ENCODE measurements at regions of chr22 and their contacts with region 1.

Region 1: DNA sequence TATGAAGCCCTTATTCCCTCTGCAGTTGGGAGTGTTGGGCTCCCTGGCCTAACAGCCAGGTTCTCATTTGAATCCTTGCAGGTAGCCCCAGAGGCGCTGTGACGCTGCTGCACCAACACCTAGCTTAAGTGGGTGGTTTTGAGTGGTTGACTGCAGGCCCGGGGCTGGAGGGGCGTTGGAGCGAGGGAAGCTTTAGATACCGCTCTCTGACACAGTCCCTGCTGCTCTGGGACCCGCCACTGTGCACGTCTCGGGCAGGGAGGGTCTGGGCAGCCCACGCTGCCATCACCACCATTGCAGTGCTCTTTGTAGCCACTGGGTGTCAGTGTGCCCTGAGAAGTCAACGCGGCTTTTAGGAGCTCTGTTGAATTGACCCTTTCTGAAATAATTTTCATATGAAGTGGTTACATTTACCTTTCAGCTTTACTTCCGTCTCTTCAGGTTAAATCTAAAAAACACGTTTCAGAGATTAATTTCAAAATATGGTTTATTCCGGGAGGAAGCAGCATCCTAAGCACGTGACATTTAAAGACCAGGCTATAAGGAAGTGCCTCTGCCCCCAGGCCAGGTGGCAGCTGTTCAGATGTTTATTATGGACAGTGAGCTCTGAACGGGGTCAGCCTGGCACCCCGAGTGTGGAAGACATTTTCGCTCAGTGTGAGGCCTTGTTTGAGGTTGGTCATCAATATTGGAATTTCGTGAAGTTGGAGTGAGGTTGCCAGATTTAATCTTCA is 30.9 kb upstream of the PARVB start:
- H3K4me3 Mint-ChIP-seq: no peak overlapping the region
- H3K27ac Mint-ChIP-seq: peak overlapping the region; percentile 82
- H3K4me1 Mint-ChIP-seq: peaks cover 41% of the 10 kb centered on the region
- H3K27me3 Mint-ChIP-seq: no peaks in the 10 kb centered on the region

Region 2: GRCh38 chr22:43826142-43827002 is 166.8 kb before region 1 on chr22:
- intact Hi-C with region 1: no loop called
- H3K4me3 Mint-ChIP-seq: no peak overlapping the region
- H3K27ac Mint-ChIP-seq: no peak overlapping the region
- H3K4me1 Mint-ChIP-seq: no peaks in the 10 kb centered on the region
- H3K27me3 Mint-ChIP-seq: peaks cover 2% of the 10 kb centered on the region

Region 3: DNA sequence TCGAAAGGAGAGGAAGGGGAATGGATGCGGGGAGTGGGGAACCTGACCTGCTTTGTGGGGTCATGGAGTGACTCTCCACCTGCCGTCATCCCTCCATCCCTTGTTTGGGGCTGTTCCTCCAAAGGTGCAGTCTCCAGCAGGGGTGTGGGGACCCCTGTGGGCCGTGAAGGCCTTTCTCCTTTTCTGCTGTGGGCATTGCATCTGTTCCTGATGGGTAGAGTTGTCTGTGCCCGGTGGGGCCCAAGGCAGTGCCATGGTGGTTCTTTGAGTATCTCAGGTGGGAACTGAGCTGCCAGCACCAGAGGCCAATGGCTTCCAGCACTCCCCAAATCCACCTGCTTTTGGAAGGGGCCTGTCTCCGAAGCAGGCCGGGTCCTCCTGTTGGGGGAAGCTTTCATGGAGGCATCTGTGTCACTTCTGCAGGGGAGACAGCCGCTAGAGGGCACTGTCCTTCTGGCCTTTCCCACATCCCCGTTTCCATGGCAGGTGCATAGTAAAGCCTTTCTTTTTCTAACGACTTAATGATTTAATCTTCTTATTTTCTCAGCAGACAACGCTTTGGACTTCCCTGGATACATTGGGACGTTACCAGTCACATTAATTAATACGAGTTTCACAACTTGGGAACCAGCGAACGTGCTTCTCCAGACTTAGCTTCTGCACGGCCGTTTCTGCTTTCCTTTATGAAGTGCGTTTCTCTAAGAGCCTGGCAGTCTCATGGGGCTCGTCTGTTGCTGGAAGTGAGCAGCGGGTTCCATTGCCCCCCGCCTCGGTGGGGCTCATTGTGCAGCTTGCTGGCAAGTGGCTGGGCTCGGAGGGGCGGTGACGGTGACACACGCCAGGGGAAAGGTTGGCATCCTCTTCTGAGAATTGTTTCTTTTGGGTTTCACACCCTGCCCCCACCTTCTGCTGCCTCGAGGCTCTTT is 88.0 kb after region 1 on chr22:
- intact Hi-C with region 1: loop called (anchors 1 kb)
- H3K4me3 Mint-ChIP-seq: no peak overlapping the region
- H3K27ac Mint-ChIP-seq: no peak overlapping the region
- H3K4me1 Mint-ChIP-seq: peaks cover 20% of the 10 kb centered on the region
- H3K27me3 Mint-ChIP-seq: no peaks in the 10 kb centered on the region

Region 4: DNA sequence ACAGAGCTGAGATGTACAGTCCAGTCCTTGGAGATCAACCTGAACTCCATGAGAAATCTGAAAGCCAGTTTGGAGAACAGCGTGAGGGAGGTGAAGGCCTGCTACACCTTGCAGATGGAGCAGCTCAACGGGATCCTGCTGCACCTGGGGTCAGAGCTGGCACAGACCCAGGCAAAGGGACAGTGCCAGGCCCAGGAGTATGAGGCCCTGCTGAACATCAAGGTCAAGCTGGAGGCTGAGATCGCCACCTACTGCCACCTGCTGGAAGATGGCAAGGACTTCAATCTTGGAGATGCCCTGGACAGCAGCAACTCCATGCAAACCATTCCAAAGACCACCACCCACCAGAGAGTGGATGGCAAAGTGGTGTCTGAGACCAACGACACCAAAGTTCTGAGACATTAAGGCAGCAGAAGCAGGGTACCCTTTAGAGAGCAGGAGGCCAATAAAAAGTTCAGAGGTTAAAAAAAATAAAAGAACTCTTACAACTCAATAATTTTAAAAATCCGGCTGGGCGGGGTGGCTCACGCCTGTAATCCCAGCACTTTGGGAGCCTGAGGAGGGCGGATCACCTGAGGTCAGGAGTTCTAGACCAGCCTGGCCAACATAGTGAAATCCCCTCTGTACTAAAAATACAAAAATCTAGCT is 574.8 kb after region 1 on chr22:
- intact Hi-C with region 1: loop called (anchors 2 kb)
- H3K4me3 Mint-ChIP-seq: no peak overlapping the region
- H3K27ac Mint-ChIP-seq: no peak overlapping the region
- H3K4me1 Mint-ChIP-seq: no peaks in the 10 kb centered on the region
- H3K27me3 Mint-ChIP-seq: peaks cover 7% of the 10 kb centered on the region

Region 5: GRCh38 chr22:44625981-44626687 is 632.9 kb after region 1 on chr22:
- intact Hi-C with region 1: loop called (anchors 2 kb)
- H3K4me3 Mint-ChIP-seq: no peak overlapping the region
- H3K27ac Mint-ChIP-seq: no peak overlapping the region
- H3K4me1 Mint-ChIP-seq: no peaks in the 10 kb centered on the region
- H3K27me3 Mint-ChIP-seq: peaks cover 10% of the 10 kb centered on the region

Measured in dendritic cell treated with granulocyte-macrophage colony-stimulating factor and Interleukin-4, amounts not matched to agents 40 ng/mL and 50 ng/mL, for 4 days (primary cell).